ENCODE measurements at regions of chr18 and their contacts with region 1.

Region 1: GRCh38 chr18:46574000-46574742 is 82.8 kb downstream of the LOXHD1 start:
- DNase-seq: no peak
- ATAC-seq: no peak
- H3K4me3 Mint-ChIP-seq: no peak overlapping the region
- H3K27ac Mint-ChIP-seq: no peak overlapping the region
- H3K4me1 Mint-ChIP-seq: no peaks in the 10 kb centered on the region
- H3K27me3 Mint-ChIP-seq: peaks cover 6% of the 10 kb centered on the region
- CTCF ChIP-seq: no peak

Region 2: GRCh38 chr18:44924785-44925499 is 1649.2 kb before region 1 on chr18:
- CTCF ChIA-PET with region 1: no interaction called
- POLR2A ChIA-PET with region 1: interaction called, 11 read pairs
- intact Hi-C with region 1: no loop called
- DNase-seq: no peak
- ATAC-seq: no peak
- H3K4me3 Mint-ChIP-seq: no peak overlapping the region
- H3K27ac Mint-ChIP-seq: no peak overlapping the region
- H3K4me1 Mint-ChIP-seq: peaks cover 26% of the 10 kb centered on the region
- H3K27me3 Mint-ChIP-seq: no peaks in the 10 kb centered on the region
- CTCF ChIP-seq: no peak